Motor neuron (in vitro differentiated cells): ENCODE measurements at regions of chr15 and their contacts with region 1.

Region 1: DNA sequence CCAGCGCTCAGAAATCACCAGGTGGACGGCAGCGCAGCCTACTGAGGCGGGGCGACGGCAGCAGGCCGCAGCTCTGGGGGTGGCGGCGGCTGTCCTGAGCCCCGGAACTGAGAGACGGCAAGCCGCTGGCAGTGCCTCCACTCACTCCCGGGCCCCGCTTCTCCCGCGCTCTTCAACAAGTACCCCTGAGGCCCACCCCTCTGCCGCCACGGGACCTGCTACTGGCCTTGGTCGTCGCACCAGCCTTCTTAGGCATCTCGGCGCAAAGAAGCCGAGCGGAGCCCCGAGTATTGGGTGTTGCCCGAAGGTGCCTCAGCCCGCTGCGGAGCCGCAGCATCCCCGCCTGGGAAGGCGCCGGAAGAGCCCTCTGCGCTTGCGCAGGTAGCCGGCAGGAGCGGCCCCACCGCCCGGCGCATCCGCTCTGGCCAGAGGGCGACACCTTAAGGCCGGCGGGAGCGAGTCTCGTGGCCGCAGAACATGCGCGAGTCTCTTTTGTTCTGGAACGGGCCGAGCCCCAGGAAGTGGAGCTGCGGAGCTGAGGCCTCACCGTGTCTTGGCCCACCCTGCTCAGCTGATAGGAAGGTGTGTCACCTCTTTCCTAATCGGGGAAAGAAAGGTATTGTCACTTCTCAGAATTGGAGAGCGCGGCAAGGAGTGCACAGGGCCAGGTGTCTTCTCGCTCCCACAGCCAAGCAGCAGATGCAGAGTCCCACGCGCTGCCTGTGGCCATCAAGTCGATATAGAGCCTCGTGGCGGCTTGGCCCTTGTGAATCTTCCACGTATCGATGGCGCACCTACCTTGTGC is at the start of gene C15orf40:
- ATAC-seq: peak; percentile 76 to 98 (median 96)
- H3K4me3 ChIP-seq: peak within 1 kb of the TSS; percentile 87 to 98 (median 89)
- H3K27ac ChIP-seq: peak within 1 kb of the TSS; percentile 73 to 84
- H3K4me1 ChIP-seq: peaks cover 34 to 36% of the 10 kb centered on the region in 2 donors
- total RNA-seq, gene C15orf40: 12.2 to 26.0 (median 23.0) TPM

Region 2: DNA sequence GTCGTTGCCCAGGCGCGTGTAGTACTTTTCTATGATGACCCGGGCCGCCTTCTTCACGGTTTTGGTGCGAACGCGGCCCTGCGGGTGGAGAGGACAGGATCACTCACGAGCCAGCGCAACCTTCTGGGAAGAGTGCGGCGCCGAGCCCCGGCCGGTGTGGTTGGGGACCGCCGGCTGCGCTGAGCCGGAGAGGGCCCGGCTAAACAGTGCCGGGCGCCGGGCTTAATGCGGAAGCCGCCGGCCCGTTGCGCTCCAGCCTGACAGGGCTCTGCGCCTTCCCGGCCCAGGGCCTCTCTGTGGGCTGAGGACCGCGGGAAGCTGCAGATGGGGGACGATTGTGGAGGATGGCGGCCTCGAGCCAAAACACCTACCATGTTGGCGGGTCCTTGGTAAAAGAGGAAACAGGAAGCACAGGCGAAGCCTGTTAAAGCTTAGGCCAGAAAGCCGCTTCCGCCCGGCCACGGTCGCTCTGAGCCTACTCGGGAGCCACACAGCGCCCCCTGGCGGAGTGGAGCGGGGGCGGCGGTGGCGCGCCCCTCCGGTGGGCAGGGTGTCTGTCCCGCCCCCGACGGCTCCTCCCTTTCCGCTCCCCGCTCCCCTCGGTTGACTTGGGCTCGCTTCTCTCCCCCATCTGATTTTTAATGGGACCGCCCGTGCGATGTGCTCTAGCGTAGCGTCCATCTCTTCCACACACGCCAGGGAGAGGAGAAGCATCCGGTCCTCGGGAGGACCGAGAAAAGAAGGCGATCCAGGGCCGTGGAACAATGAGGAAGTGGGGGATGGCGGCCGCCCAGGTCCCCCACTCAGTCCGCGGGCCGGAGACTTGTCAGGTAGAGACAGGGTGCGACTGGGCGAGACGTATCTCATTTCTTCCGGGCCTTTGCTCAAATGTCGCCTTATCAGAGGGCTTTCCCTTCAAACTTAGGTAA is 471.2 kb before region 1 on chr15 and contains the start of gene RPS17:
- in situ Hi-C with region 1: loop called in 1 of 9 experiments (anchors 25 kb)
- ATAC-seq: peak; percentile 85 to 98 (median 96)
- H3K4me3 ChIP-seq: peak within 1 kb of the TSS; percentile 56 to 91 (median 79)
- H3K27ac ChIP-seq: peak within 1 kb of the TSS; percentile 81 to 84
- H3K4me1 ChIP-seq: peaks cover 11 to 13% of the 10 kb centered on the region in 2 donors
- total RNA-seq, gene RPS17: 3,134 to 7,614 (median 5,651) TPM

Region 3: GRCh38 chr15:83178869-83179325 is 167.4 kb after region 1 on chr15:
- in situ Hi-C with region 1: no loop called
- ATAC-seq: no peak
- H3K4me3 ChIP-seq: no peak overlapping the region
- H3K27ac ChIP-seq: no peak overlapping the region
- H3K4me1 ChIP-seq: no peaks in the 10 kb centered on the region

Region 4: GRCh38 chr15:83207622-83208411 is 196.3 kb after region 1 on chr15 and contains the start of gene HDGFL3:
- in situ Hi-C with region 1: loop called in 1 of 9 experiments (anchors 25 kb)
- ATAC-seq: peak; percentile 37 to 77 (median 70)
- H3K4me3 ChIP-seq: peak within 1 kb of the TSS; percentile 55 to 99 (median 70)
- H3K27ac ChIP-seq: peak within 1 kb of the TSS; percentile 92
- H3K4me1 ChIP-seq: peaks cover 22 to 24% of the 10 kb centered on the region in 2 donors
- total RNA-seq, gene HDGFL3: 39.4 to 174 (median 107) TPM

Region 5: DNA sequence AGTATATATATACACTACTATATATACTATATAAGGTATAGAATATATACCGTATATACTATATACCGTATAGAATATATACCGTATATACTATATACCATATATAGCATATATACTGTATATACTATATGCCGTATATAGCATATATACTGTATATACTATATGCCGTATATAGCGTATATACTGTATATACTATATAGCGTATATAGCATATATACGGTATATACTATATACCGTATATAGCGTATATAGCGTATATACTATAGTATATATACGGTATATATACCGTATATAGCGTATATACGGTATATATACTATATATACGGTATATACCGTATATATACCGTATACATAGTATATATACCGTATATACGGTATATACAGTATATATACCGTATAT is 218.8 kb after region 1 on chr15:
- in situ Hi-C with region 1: no loop called
- ATAC-seq: no peak
- H3K4me3 ChIP-seq: no peak overlapping the region
- H3K27ac ChIP-seq: no peak overlapping the region
- H3K4me1 ChIP-seq: no peaks in the 10 kb centered on the region